PC-3 (cell line): ENCODE measurements at regions of chr14 and their contacts with region 1.

Region 1: GRCh38 chr14:98826618-98827017 is 445.4 kb downstream of the BCL11B start:
- DNase-seq: no peak
- ATAC-seq: no peak
- H3K4me3 ChIP-seq: no peak overlapping the region
- H3K27ac ChIP-seq: no peak overlapping the region
- H3K4me1 ChIP-seq: no peaks in the 10 kb centered on the region
- H3K27me3 ChIP-seq: peaks cover 2% of the 10 kb centered on the region; the same call in 1 of the 2 replicates
- CTCF ChIP-seq: no peak

Region 2: DNA sequence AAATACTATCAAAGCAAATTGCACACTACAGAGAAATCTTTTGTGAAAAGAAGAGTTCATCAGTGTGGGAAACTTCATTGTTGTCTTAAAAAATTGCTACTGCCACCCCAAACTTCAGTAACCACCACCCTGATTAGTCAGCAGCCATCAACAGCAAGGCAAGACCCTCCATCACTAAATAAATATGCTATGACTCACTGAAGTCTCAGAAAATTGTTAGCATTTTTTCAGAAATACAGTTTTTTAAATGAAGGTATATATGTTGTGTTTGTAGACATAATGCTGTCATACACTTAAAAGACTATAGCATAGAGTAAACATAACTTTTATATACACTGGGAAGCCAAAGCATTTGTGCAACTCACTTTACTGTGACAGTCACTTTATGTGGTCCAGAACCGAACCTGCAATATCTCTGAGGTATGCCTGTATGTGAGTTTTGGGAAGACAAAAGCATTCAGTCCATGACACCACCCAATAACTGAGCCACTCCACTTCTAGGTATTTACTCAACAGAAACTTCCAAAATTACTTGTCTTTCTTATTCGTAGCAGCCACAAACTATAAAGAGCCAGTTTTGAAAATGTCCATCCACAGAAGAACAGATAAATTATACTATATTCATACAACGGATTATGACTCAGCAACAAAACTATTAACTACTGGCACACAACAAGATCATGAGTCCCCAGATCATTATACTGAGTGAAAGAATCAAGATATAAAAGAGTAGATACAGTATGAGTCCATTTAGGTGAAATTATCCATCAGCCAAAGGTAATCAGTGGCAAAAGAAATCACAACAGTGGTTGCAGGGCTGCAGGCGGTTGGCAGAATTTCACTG is 204.2 kb before region 1 on chr14:
- CTCF ChIA-PET with region 1: no interaction called
- POLR2A ChIA-PET with region 1: interaction called, 30 read pairs
- intact Hi-C with region 1: no loop called
- DNase-seq: peak; percentile 28
- ATAC-seq: no peak
- H3K4me3 ChIP-seq: no peak overlapping the region
- H3K27ac ChIP-seq: no peak overlapping the region
- H3K4me1 ChIP-seq: no peaks in the 10 kb centered on the region
- H3K27me3 ChIP-seq: no peaks in the 10 kb centered on the region
- CTCF ChIP-seq: no peak

Region 3: GRCh38 chr14:98766818-98767217 is 59.8 kb before region 1 on chr14:
- CTCF ChIA-PET with region 1: no interaction called
- POLR2A ChIA-PET with region 1: no interaction called
- intact Hi-C with region 1: no loop called
- DNase-seq: no peak
- ATAC-seq: no peak
- H3K4me3 ChIP-seq: no peak overlapping the region
- H3K27ac ChIP-seq: no peak overlapping the region
- H3K4me1 ChIP-seq: no peaks in the 10 kb centered on the region
- H3K27me3 ChIP-seq: 0 out of 2 replicates have a peak, but pooled peaks cover 3% of the 10 kb centered on the region
- CTCF ChIP-seq: no peak

Region 4: DNA sequence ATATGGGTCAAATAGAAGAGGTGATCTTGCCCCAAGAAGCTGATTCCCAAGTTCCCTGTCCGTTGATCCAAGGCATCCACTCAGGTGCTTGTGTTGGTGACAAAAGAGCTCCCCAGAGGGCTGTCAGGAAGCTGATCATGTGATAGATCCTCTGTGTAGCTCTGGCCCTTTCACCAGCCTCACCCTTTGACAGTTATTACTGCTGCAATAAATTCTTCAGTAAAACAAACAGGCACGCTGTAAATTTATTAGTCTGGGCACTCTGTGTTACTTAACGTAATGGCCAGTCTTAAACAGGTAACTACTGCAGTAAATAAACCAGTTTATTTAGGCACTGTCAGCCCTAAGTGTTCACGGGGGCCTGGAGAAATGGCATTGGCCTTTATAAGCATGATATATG is 28.5 kb before region 1 on chr14:
- CTCF ChIA-PET with region 1: no interaction called
- POLR2A ChIA-PET with region 1: no interaction called
- intact Hi-C with region 1: no loop called
- DNase-seq: no peak
- ATAC-seq: no peak
- H3K4me3 ChIP-seq: no peak overlapping the region
- H3K27ac ChIP-seq: no peak overlapping the region
- H3K4me1 ChIP-seq: no peaks in the 10 kb centered on the region
- H3K27me3 ChIP-seq: no peaks in the 10 kb centered on the region
- CTCF ChIP-seq: no peak